Vagina (tissue), 2 donors: ENCODE measurements at regions of chr16 and their contacts with region 1.

Region 1: DNA sequence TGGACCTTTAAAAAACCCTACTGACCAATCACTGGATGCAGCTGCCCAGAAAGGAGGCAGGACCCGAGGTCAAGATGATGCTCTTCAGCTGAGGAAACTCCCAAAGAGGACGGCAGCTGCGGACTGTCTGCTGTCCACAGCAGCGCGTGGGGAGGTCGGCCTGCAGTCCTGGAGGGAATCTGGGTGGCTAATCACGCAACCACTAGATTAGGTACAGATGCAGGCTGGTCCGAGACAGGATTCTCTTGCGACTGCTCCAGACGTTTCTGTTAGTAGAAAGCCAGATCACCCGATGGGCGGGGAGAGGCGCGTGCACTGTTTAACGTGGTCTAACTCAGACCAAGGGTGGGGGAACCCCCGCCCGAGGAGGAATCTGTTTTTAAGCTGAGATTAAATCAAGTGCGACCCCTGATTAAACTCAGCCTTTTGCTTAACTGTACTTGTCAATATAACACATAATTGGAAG is 8.8 kb downstream of the CTRB2 start:
- DNase-seq: no peak
- H3K4me3 ChIP-seq: no peak overlapping the region
- H3K27ac ChIP-seq: peak overlapping the region; percentile 2
- H3K4me1 ChIP-seq: peaks cover 3% of the 10 kb centered on the region
- H3K27me3 ChIP-seq: no peaks in the 10 kb centered on the region
- CTCF ChIP-seq: no peak
- POLR2A ChIP-seq: no peak

Region 2: GRCh38 chr16:75402821-75403475 is 204.8 kb after region 1 on chr16:
- intact Hi-C with region 1: loop called (anchors 10 kb)
- DNase-seq: no peak
- H3K4me3 ChIP-seq: no peak overlapping the region
- H3K27ac ChIP-seq: peak overlapping the region; percentile 76
- H3K4me1 ChIP-seq: peaks cover 18% of the 10 kb centered on the region
- H3K27me3 ChIP-seq: no peaks in the 10 kb centered on the region
- CTCF ChIP-seq: peak in 2 of 3 experiments; percentile 56 to 57
- POLR2A ChIP-seq: no peak